ENCODE measurements at regions of chr1 and their contacts with region 1.

Region 1: GRCh38 chr1:181134543-181135362 is 46.3 kb downstream of the IER5 start:
- DNase-seq: no peak
- H3K4me3 ChIP-seq: no peak overlapping the region
- H3K27ac ChIP-seq: peak overlapping the region; percentile 61
- H3K4me1 ChIP-seq: peaks cover 14 to 25% (median 20%) of the 10 kb centered on the region in 4 experiments
- H3K27me3 ChIP-seq: no peaks in the 10 kb centered on the region; a peak in 1 of 7 replicates
- CTCF ChIP-seq: no peak
- EP300 ChIP-seq: no peak
- POLR2A ChIP-seq: no peak; a peak in 1 of 3 replicates
- RAD21 ChIP-seq: no peak

Region 2: DNA sequence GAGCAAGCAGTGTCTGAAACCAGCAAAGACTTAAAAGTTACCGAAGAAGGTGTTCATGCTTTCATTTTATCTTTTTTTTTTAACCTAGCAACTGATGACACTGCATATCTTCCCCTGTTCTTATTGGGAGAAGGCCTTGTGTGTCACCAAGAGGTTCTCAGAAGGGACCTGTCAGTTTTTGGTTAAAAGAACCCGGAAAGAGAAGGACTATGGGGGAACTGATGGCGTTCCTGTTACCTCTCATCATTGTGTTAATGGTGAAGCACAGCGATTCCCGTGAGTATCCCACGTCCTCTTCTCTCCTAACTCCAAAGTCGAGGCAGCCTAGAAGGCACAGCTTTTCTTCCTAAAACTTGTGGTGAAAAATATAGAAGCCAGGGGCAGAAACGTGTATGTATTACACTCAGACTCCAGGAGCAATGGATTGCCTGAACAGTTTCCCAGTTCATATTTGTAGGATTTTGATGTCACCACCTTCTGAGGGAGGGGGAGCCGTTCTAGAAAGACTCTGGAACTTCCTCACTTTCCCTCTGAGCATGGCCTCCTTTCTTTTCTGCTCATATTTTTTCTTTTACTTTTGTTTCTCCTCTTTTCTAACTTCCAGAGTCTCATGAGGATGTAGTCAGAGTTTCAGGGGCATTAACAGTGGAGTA is 100.8 kb before region 1 on chr1 and contains the start of gene MR1:
- CTCF ChIA-PET with region 1: interaction called, 142 read pairs
- POLR2A ChIA-PET with region 1: interaction called, 3 read pairs
- DNase-seq: no peak
- H3K4me3 ChIP-seq: no peak within 1 kb of the TSS
- H3K27ac ChIP-seq: no peak within 1 kb of the TSS
- H3K4me1 ChIP-seq: no peaks in the 10 kb centered on the region
- H3K27me3 ChIP-seq: no peaks in the 10 kb centered on the region
- CTCF ChIP-seq: no peak
- EP300 ChIP-seq: no peak
- POLR2A ChIP-seq: no peak
- RAD21 ChIP-seq: no peak
- total RNA-seq, gene MR1: 0.19 TPM in 1 of 2 replicates, not detected in the other

Region 3: GRCh38 chr1:181049378-181049777 is 85.4 kb before region 1 on chr1:
- CTCF ChIA-PET with region 1: no interaction called
- POLR2A ChIA-PET with region 1: no interaction called
- DNase-seq: no peak
- H3K4me3 ChIP-seq: no peak overlapping the region
- H3K27ac ChIP-seq: no peak overlapping the region
- H3K4me1 ChIP-seq: no peaks in the 10 kb centered on the region; a peak in 1 of 7 replicates
- H3K27me3 ChIP-seq: no peaks in the 10 kb centered on the region
- CTCF ChIP-seq: no peak
- EP300 ChIP-seq: no peak
- POLR2A ChIP-seq: no peak
- RAD21 ChIP-seq: no peak

Region 4: GRCh38 chr1:181079382-181079781 is 55.4 kb before region 1 on chr1:
- CTCF ChIA-PET with region 1: interaction called, 12 read pairs
- POLR2A ChIA-PET with region 1: interaction called, 4 read pairs
- DNase-seq: no peak
- H3K4me3 ChIP-seq: no peak overlapping the region
- H3K27ac ChIP-seq: no peak overlapping the region
- H3K4me1 ChIP-seq: peaks cover 0 to 3% (median 0%) of the 10 kb centered on the region in 4 experiments; a peak in 1 of 7 replicates
- H3K27me3 ChIP-seq: no peaks in the 10 kb centered on the region
- CTCF ChIP-seq: no peak
- EP300 ChIP-seq: no peak
- POLR2A ChIP-seq: no peak
- RAD21 ChIP-seq: no peak

Region 5: DNA sequence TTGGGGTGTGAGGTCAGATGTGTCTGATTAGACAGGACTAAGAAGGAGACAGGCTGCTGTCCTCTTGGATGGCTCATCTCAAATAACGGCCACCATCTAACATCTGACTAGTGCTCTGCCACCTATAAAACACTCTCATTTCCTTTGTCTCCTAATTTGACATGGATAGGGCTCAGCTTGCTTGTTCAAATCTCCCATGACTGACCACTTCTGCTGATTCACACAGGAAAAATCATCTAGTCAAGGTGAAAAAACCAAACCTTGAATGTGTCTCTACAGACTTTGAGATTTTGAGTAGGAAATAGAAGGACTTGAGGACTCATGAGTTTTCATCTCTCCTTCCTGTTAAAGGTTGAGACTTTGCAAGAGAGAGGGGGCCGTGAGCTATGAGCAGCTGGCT is 104.3 kb after region 1 on chr1:
- CTCF ChIA-PET with region 1: no interaction called
- POLR2A ChIA-PET with region 1: no interaction called
- DNase-seq: no peak
- H3K4me3 ChIP-seq: no peak overlapping the region
- H3K27ac ChIP-seq: no peak overlapping the region
- H3K4me1 ChIP-seq: no peaks in the 10 kb centered on the region
- H3K27me3 ChIP-seq: no peaks in the 10 kb centered on the region
- CTCF ChIP-seq: no peak
- EP300 ChIP-seq: no peak
- POLR2A ChIP-seq: no peak
- RAD21 ChIP-seq: no peak

Measured in H1 (cell line).